ENCODE measurements at regions of chr13 and their contacts with region 1.

Region 1: GRCh38 chr13:25301347-25302047 is at the start of gene NUP58:
- DNase-seq: peak; percentile 95
- ATAC-seq: peak; percentile 100
- H3K4me3 ChIP-seq: peak within 1 kb of the TSS; percentile 92
- H3K27ac ChIP-seq: peak within 1 kb of the TSS; percentile 91
- H3K4me1 ChIP-seq: no peaks in the 10 kb centered on the region; the same call in 1 of the 2 replicates
- H3K27me3 ChIP-seq: peaks cover 3% of the 10 kb centered on the region; the same call in 1 of the 2 replicates
- CTCF ChIP-seq: no peak
- POLR2A ChIP-seq: peak; percentile 99
- RAD21 ChIP-seq: no peak
- total RNA-seq, gene NUP58: 50.7 and 61.4 TPM in 2 replicates

Region 2: GRCh38 chr13:25286969-25287961 is 14.2 kb before region 1 on chr13 and contains the start of gene MTMR6:
- CTCF ChIA-PET with region 1: interaction called, 3 read pairs
- POLR2A ChIA-PET with region 1: interaction called, 4 read pairs
- dilution Hi-C with region 1: no loop called
- in situ Hi-C with region 1: no loop called
- intact Hi-C with region 1: loop called (anchors 1 kb)
- DNase-seq: peak; percentile 82
- ATAC-seq: peak; percentile 99
- H3K4me3 ChIP-seq: peak within 1 kb of the TSS; percentile 93
- H3K27ac ChIP-seq: peak within 1 kb of the TSS; percentile 72
- H3K4me1 ChIP-seq: no peaks in the 10 kb centered on the region
- H3K27me3 ChIP-seq: 0 out of 2 replicates have a peak, but pooled peaks cover 3% of the 10 kb centered on the region
- CTCF ChIP-seq: peak; percentile 97
- POLR2A ChIP-seq: peak; percentile 83
- RAD21 ChIP-seq: peak; percentile 58
- total RNA-seq, gene MTMR6: 21.7 and 33.1 TPM in 2 replicates

Region 3: GRCh38 chr13:25783601-25784024 is 482.1 kb after region 1 on chr13:
- CTCF ChIA-PET with region 1: no interaction called
- POLR2A ChIA-PET with region 1: no interaction called
- dilution Hi-C with region 1: no loop called
- in situ Hi-C with region 1: no loop called
- intact Hi-C with region 1: no loop called
- DNase-seq: no peak
- ATAC-seq: no peak
- H3K4me3 ChIP-seq: no peak overlapping the region
- H3K27ac ChIP-seq: no peak overlapping the region
- H3K4me1 ChIP-seq: no peaks in the 10 kb centered on the region
- H3K27me3 ChIP-seq: no peaks in the 10 kb centered on the region
- CTCF ChIP-seq: no peak
- POLR2A ChIP-seq: no peak
- RAD21 ChIP-seq: no peak